H1 (cell line): ENCODE measurements at regions of chr19 and their contacts with region 1.

Region 1: DNA sequence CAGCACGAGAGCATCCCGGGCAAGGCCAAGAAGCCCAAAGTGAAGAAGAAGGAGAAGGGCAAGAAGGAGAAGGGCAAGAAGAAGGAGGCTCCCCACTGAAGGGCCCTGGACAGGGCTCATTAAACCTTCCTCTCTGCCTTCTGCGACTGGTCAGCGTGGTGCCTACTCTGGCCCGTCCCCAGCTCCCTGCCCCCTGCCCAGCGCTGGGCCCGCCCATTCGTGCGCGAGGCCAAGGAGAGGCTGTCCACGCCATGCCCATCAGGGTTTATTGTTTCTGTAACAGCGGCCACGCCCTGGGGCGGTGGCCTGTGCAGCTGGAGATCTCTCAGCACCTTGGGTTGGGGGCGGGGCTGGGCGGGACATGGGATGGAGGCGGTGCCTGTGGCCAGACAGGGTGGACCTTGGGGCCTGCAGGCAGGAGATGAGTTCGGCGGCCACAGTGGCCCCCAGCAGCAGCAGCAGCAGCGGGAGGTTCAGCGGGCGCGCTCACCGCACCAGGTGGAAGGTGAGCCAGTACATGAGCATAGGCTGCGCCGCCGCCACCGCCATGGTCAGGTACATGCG is 897 bp downstream of the C19orf33 start:
- DNase-seq: peak; percentile 83 to 85
- H3K4me3 ChIP-seq: peak overlapping the region; percentile 29 to 59 (median 50)
- H3K27ac ChIP-seq: 0 out of 2 replicates have a peak overlapping the region, but pooled peaks have one; percentile 37
- H3K4me1 ChIP-seq: peaks cover 2 to 14% (median 6%) of the 10 kb centered on the region in 4 experiments; a peak in 6 of 7 replicates
- H3K27me3 ChIP-seq: no peaks in the 10 kb centered on the region; a peak in 2 of 7 replicates
- CTCF ChIP-seq: no peak
- EP300 ChIP-seq: no peak
- POLR2A ChIP-seq: no peak
- RAD21 ChIP-seq: no peak

Region 2: GRCh38 chr19:38250821-38251563 is 54.0 kb before region 1 on chr19:
- CTCF ChIA-PET with region 1: interaction called, 8 read pairs
- POLR2A ChIA-PET with region 1: interaction called, 12 read pairs
- DNase-seq: peak in 1 of 2 experiments; percentile 70
- H3K4me3 ChIP-seq: peak overlapping the region in 3 of 4 experiments; percentile 4 to 50 (median 14); a peak in 5 of 8 replicates
- H3K27ac ChIP-seq: no peak overlapping the region
- H3K4me1 ChIP-seq: peaks cover 10 to 39% (median 24%) of the 10 kb centered on the region in 4 experiments
- H3K27me3 ChIP-seq: peaks cover 0 to 9% (median 8%) of the 10 kb centered on the region in 4 experiments; a peak in 4 of 7 replicates
- CTCF ChIP-seq: no peak
- EP300 ChIP-seq: no peak
- POLR2A ChIP-seq: no peak
- RAD21 ChIP-seq: no peak

Region 3: DNA sequence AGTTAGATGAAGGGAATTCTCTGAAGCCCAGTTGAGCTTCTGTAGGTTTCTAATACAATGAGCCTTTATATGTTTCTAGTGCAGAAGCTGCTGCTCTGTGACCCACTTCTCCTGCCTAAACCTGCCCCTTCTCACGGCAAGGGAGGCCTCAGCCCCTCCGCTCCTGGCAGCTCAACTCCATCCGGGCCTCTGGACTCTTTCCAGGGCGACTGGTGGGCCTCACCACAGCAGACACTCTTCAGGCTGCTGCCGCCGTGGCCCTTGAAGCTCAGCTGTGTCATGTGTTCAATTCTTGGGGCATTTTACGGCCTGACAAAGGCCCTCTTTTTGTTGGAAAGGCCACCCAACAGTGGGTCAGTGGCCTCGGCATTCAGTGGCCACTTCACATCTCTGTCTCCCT is 10.9 kb before region 1 on chr19:
- CTCF ChIA-PET with region 1: interaction called, 7 read pairs
- POLR2A ChIA-PET with region 1: interaction called, 34 read pairs
- DNase-seq: no peak
- H3K4me3 ChIP-seq: no peak overlapping the region
- H3K27ac ChIP-seq: no peak overlapping the region
- H3K4me1 ChIP-seq: no peaks in the 10 kb centered on the region
- H3K27me3 ChIP-seq: no peaks in the 10 kb centered on the region
- CTCF ChIP-seq: no peak
- EP300 ChIP-seq: no peak
- POLR2A ChIP-seq: no peak
- RAD21 ChIP-seq: no peak

Region 4: GRCh38 chr19:38315657-38316476 is 10.9 kb after region 1 on chr19 and contains the start of gene YIF1B:
- CTCF ChIA-PET with region 1: interaction called, 5 read pairs
- POLR2A ChIA-PET with region 1: interaction called, 17 read pairs
- DNase-seq: peak; percentile 92 to 94
- H3K4me3 ChIP-seq: peak within 1 kb of the TSS; percentile 61 to 89 (median 64)
- H3K27ac ChIP-seq: peak within 1 kb of the TSS; percentile 73
- H3K4me1 ChIP-seq: peaks cover 0 to 11% (median 3%) of the 10 kb centered on the region in 4 experiments; a peak in 5 of 7 replicates
- H3K27me3 ChIP-seq: peaks cover 0 to 29% (median 16%) of the 10 kb centered on the region in 4 experiments; a peak in 6 of 7 replicates
- CTCF ChIP-seq: no peak
- EP300 ChIP-seq: no peak
- POLR2A ChIP-seq: no peak; a peak in 1 of 3 replicates
- RAD21 ChIP-seq: no peak
- total RNA-seq, gene YIF1B: 89.6 and 94.3 TPM in 2 replicates

Region 5: DNA sequence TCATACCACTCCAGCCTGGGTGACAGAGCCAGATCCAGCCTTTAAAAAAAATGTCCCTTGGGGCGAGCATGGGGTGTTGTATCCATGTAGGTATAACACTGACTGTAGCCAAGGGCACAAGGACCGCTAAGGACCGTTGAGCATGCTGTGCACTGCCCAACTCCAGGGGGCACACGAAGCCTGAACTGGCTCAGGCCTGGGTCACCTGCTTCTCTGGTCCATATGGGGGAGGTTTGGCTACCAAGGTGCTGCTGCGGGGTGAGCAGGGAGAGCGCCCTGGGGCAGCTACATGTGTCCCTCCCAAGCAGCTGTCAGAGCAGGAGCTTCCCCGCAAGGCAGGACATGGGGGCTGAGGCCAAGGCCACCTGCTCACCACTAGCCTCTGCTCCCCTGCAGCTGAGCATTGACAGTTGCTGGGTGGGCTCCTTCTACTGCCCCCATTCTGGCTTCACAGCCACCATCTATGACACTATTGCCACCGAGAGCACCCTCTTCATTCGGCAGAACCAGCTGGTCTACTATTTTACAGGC is 47.0 kb after region 1 on chr19:
- CTCF ChIA-PET with region 1: no interaction called
- POLR2A ChIA-PET with region 1: no interaction called
- DNase-seq: no peak
- H3K4me3 ChIP-seq: no peak overlapping the region
- H3K27ac ChIP-seq: no peak overlapping the region
- H3K4me1 ChIP-seq: no peaks in the 10 kb centered on the region
- H3K27me3 ChIP-seq: no peaks in the 10 kb centered on the region; a peak in 1 of 7 replicates
- CTCF ChIP-seq: no peak
- EP300 ChIP-seq: no peak
- POLR2A ChIP-seq: no peak
- RAD21 ChIP-seq: no peak